Psoas muscle (tissue), 8 donors: ENCODE measurements at regions of chr19 and their contacts with region 1.

Region 1: DNA sequence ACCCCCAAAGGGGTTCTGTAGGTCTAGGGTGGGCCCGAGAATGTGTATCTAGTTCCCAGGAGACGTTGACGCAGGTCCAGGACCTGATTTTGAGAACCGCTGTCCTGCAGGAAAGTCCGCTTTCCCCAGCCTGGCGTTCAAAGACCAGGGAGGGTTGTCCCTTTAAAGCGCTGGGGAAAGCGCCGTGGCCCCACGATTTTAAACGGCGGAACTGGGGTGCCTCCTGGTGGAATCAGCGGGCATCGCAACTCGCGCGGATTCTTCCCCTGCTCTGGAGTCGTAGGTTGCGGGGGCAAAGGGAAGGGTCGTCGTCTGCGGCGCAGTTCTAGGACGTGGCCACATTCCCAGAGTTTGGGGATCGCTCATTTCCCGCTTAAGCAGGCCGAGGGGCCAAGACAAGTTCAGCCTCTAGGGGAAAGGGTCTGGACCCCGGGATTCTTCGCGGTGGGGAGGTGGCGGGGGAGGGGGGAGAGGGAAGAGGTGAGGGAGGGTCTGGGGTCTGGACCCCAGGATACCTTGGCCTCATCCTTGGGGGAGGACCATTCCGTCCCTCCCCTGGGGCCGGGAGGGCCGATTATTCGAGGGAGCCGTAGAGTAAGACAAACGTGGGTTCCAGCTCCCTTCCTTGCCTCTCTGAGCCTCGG is 7.7 kb downstream of the PNMA8B start:
- DNase-seq: peak; percentile 79 to 83
- ATAC-seq: peak; percentile 72 to 89 (median 84)
- H3K4me3 ChIP-seq: peak overlapping the region; percentile 53
- H3K27ac ChIP-seq: no peak overlapping the region
- H3K4me1 ChIP-seq: no peaks in the 10 kb centered on the region
- H3K27me3 ChIP-seq: peaks cover 0 to 60% (median 16%) of the 10 kb centered on the region in 3 donors
- CTCF ChIP-seq: peak; percentile 85

Region 2: DNA sequence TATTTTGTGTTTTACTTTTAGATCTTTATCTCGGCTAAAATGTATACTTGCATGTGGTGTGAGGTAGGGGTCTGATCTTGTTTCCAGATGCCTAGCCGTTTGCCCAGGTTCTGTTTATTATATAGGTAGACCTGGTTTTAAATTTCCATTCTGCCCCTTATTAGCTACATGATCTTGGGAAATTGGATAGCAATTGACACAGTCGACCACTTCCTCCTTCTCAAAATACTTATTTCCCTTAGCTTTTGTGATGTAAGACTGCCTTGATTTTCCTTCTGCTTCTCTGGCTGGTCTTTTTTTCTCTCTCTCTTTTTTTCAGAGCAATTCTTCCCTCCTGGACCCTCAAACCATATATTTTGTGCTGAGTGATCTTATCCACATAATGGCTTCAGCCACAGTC is 462.1 kb before region 1 on chr19:
- intact Hi-C with region 1: loop called in 1 of 2 experiments (anchors 5 kb)
- DNase-seq: no peak
- ATAC-seq: no peak
- H3K4me3 ChIP-seq: no peak overlapping the region
- H3K27ac ChIP-seq: no peak overlapping the region
- H3K4me1 ChIP-seq: no peaks in the 10 kb centered on the region
- H3K27me3 ChIP-seq: peaks cover 0 to 49% (median 4%) of the 10 kb centered on the region in 3 donors
- CTCF ChIP-seq: no peak

Region 3: GRCh38 chr19:46283771-46284170 is 204.2 kb before region 1 on chr19:
- intact Hi-C with region 1: loop called (anchors 5 to 10 kb)
- DNase-seq: no peak
- ATAC-seq: peak in 1 of 4 donors; percentile 47
- H3K4me3 ChIP-seq: no peak overlapping the region
- H3K27ac ChIP-seq: peak overlapping the region; percentile 41
- H3K4me1 ChIP-seq: no peaks in the 10 kb centered on the region
- H3K27me3 ChIP-seq: peaks cover 0 to 14% (median 2%) of the 10 kb centered on the region in 3 donors
- CTCF ChIP-seq: no peak

Region 4: GRCh38 chr19:46288896-46289588 is 198.9 kb before region 1 on chr19:
- intact Hi-C with region 1: loop called (anchors 5 to 10 kb)
- DNase-seq: no peak
- ATAC-seq: peak in 2 of 4 donors; percentile 56 to 61
- H3K4me3 ChIP-seq: no peak overlapping the region
- H3K27ac ChIP-seq: no peak overlapping the region
- H3K4me1 ChIP-seq: no peaks in the 10 kb centered on the region
- H3K27me3 ChIP-seq: peaks cover 0 to 8% (median 2%) of the 10 kb centered on the region in 3 donors
- CTCF ChIP-seq: no peak

Region 5: GRCh38 chr19:46402725-46403124 is 85.2 kb before region 1 on chr19:
- intact Hi-C with region 1: loop called (anchors 2 kb)
- DNase-seq: peak in 1 of 2 donors; percentile 28
- ATAC-seq: no peak
- H3K4me3 ChIP-seq: no peak overlapping the region
- H3K27ac ChIP-seq: no peak overlapping the region
- H3K4me1 ChIP-seq: peaks cover 8% of the 10 kb centered on the region
- H3K27me3 ChIP-seq: peaks cover 0 to 54% (median 24%) of the 10 kb centered on the region in 3 donors
- CTCF ChIP-seq: no peak